K562 (cell line): ENCODE measurements at regions of chr19 and their contacts with region 1.

Region 1: DNA sequence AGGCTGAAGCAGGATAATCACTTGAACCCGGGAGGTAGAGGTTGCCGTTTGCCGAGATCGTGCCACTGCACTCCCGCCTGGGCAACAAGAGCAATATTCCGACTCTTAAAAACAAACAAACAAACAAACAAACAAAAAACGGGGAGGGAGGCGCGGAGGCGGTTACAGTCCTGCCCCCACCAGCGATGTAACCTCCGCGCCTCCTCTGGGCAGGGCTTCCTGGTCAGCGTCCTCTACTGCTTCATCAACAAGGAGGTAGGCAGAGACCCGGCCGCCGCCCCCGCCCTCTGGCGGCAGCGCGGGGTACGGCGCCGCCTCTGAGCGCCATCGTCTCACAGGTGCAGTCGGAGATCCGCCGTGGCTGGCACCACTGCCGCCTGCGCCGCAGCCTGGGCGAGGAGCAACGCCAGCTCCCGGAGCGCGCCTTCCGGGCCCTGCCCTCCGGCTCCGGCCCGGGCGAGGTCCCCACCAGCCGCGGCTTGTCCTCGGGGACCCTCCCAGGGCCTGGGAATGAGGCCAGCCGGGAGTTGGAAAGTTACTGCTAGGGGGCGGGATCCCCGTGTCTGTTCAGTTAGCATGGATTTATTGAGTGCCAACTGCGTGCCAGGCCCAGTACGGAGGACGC is 10.2 kb downstream of the SNRPD2 start:
- DNase-seq: peak; percentile 78 to 89 (median 83)
- ATAC-seq: peak; percentile 94
- H3K4me3 ChIP-seq: peak overlapping the region; percentile 20
- H3K27ac ChIP-seq: peak overlapping the region; percentile 32; the same call in 1 of the 3 replicates
- H3K4me1 ChIP-seq: peaks cover 3 to 24% of the 10 kb centered on the region in 2 experiments; a peak in 2 of 5 replicates
- H3K27me3 ChIP-seq: no peaks in the 10 kb centered on the region
- CTCF ChIP-seq: peak; percentile 90 to 95 (median 93)
- EP300 ChIP-seq: no peak
- POLR2A ChIP-seq: 0 out of 2 replicates have a peak, but pooled peaks have one; percentile 12
- RAD21 ChIP-seq: peak; percentile 62 to 76

Region 2: GRCh38 chr19:45591004-45591637 is 90.4 kb before region 1 on chr19:
- CTCF ChIA-PET with region 1: no interaction called
- POLR2A ChIA-PET with region 1: no interaction called
- in situ Hi-C with region 1: loop called (anchors 5 kb)
- intact Hi-C with region 1: loop called (anchors 2 kb)
- DNase-seq: peak; percentile 79 to 88 (median 82)
- ATAC-seq: peak; percentile 98
- H3K4me3 ChIP-seq: no peak overlapping the region
- H3K27ac ChIP-seq: no peak overlapping the region
- H3K4me1 ChIP-seq: peaks cover 21 to 22% of the 10 kb centered on the region in 2 experiments
- H3K27me3 ChIP-seq: 0 out of 5 replicates have a peak, but pooled peaks cover 0 to 4% of the 10 kb centered on the region in 2 experiments
- CTCF ChIP-seq: peak; percentile 83 to 94 (median 88)
- EP300 ChIP-seq: no peak
- POLR2A ChIP-seq: no peak
- RAD21 ChIP-seq: peak; percentile 71 to 91

Region 3: GRCh38 chr19:45598267-45599001 is 83.1 kb before region 1 on chr19:
- CTCF ChIA-PET with region 1: no interaction called
- POLR2A ChIA-PET with region 1: no interaction called
- in situ Hi-C with region 1: loop called (anchors 5 kb)
- intact Hi-C with region 1: no loop called
- DNase-seq: no peak
- ATAC-seq: no peak
- H3K4me3 ChIP-seq: no peak overlapping the region
- H3K27ac ChIP-seq: no peak overlapping the region
- H3K4me1 ChIP-seq: peaks cover 3 to 15% of the 10 kb centered on the region in 2 experiments; a peak in 3 of 5 replicates
- H3K27me3 ChIP-seq: peaks cover 41 to 54% of the 10 kb centered on the region in 2 experiments
- CTCF ChIP-seq: no peak
- EP300 ChIP-seq: no peak
- POLR2A ChIP-seq: no peak
- RAD21 ChIP-seq: no peak

Region 4: DNA sequence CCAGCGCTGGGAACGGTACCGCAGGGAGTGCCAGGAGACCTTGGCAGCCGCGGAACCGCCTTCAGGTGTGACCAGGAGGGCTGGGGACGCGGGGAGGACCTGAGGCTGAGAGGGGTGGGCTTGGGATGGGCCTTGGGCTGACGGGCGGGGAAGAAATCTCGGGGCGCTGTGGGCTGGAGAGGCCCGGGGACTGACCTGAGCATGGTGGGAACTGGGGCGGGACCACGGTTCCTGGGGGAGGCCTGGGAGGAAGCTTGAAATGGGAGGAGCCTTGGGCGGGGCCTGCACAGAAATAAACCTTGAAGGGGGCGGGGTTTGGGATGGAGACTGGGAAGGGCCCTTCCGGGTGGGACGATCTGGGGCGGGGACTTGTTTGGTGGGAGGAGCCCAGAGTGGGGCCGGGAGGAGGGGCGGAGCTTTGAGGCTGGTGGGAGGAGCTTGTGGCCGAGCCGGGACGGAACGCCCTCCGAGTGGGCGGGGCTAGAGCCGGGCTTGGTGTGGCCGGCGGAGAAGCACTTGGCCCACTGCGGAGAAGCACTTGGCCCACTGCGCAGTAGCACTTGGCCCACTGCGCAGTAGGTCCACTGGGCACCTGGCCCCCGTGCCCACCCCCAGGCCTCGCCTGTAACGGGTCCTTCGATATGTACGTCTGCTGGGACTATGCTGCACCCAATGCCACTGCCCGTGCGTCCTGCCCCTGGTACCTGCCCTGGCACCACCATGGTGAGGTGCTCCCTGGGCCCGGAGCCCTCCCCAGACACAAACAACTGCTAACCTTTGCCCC is 10.6 kb before region 1 on chr19:
- CTCF ChIA-PET with region 1: interaction called, 3 read pairs
- POLR2A ChIA-PET with region 1: interaction called, 10 read pairs
- in situ Hi-C with region 1: no loop called
- intact Hi-C with region 1: no loop called
- DNase-seq: peak; percentile 98 to 100 (median 100)
- ATAC-seq: peak; percentile 84
- H3K4me3 ChIP-seq: peak overlapping the region; percentile 58
- H3K27ac ChIP-seq: peak overlapping the region; percentile 92; the same call in 2 of the 3 replicates
- H3K4me1 ChIP-seq: peaks cover 16 to 40% of the 10 kb centered on the region in 2 experiments; a peak in 4 of 5 replicates
- H3K27me3 ChIP-seq: no peaks in the 10 kb centered on the region
- CTCF ChIP-seq: no peak
- EP300 ChIP-seq: no peak
- POLR2A ChIP-seq: no peak; the same call in 1 of the 2 replicates
- RAD21 ChIP-seq: no peak